ENCODE measurements at regions of chr16 and their contacts with region 1.

Region 1: GRCh38 chr16:85010931-85011845 is at the start of gene ZDHHC7:
- H3K4me3 ChIP-seq: peak within 1 kb of the TSS; percentile 79
- H3K27ac ChIP-seq: peak within 1 kb of the TSS; percentile 92
- H3K4me1 ChIP-seq: 0 out of 2 replicates have a peak, but pooled peaks cover 5% of the 10 kb centered on the region
- CTCF ChIP-seq: peak; percentile 47; the same call in 1 of the 2 replicates

Region 2: DNA sequence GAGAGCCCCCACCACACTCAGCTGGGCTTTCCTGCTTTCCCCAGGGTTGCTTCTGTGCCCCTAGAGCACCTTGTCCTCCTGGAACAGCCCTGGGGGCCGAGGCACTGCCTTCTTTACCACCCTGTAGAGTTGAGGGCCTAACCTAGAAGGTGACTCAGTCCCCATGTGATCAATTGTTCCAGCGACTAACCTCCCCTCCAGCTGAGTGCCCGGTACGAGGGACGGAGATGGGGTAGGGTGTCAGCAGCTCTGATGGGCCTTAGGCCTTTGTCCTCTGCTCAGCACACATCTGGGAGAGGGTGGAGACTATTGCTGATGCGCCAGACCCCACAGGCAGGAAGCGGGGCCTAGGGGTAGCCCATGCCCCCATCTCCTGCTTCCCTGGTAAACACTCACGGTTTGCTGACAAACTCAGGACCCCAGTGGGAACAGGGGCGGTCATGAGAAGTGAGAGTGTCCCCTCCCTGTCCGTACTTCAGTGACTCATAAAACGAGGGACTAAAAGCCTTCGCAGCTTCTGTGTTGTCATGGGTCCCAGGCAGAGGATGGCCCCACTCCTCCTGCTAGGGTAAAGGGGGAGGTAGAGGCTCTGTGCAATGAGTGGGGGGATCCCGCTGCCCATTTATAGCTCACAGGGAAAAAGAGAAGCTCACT is 1010.1 kb before region 1 on chr16:
- CTCF ChIA-PET with region 1: no interaction called
- POLR2A ChIA-PET with region 1: no interaction called
- H3K4me3 ChIP-seq: no peak overlapping the region
- H3K27ac ChIP-seq: no peak overlapping the region
- H3K4me1 ChIP-seq: no peaks in the 10 kb centered on the region
- CTCF ChIP-seq: no peak

Region 3: GRCh38 chr16:84785843-84786581 is 225.2 kb before region 1 on chr16:
- CTCF ChIA-PET with region 1: no interaction called
- POLR2A ChIA-PET with region 1: no interaction called
- H3K4me3 ChIP-seq: no peak overlapping the region
- H3K27ac ChIP-seq: no peak overlapping the region
- H3K4me1 ChIP-seq: peaks cover 3% of the 10 kb centered on the region; the same call in 1 of the 2 replicates
- CTCF ChIP-seq: no peak

Region 4: GRCh38 chr16:85027349-85027957 is 16.3 kb after region 1 on chr16 and contains the start of gene KIAA0513:
- CTCF ChIA-PET with region 1: interaction called, 7 read pairs
- POLR2A ChIA-PET with region 1: interaction called, 25 read pairs
- H3K4me3 ChIP-seq: peak within 1 kb of the TSS; percentile 81
- H3K27ac ChIP-seq: no peak within 1 kb of the TSS; the same call in 1 of the 2 replicates
- H3K4me1 ChIP-seq: peaks cover 16% of the 10 kb centered on the region
- CTCF ChIP-seq: peak; percentile 63

Region 5: GRCh38 chr16:85041219-85042166 is 30.3 kb after region 1 on chr16:
- CTCF ChIA-PET with region 1: no interaction called
- POLR2A ChIA-PET with region 1: no interaction called
- H3K4me3 ChIP-seq: no peak overlapping the region
- H3K27ac ChIP-seq: no peak overlapping the region
- H3K4me1 ChIP-seq: peaks cover 3% of the 10 kb centered on the region; the same call in 1 of the 2 replicates
- CTCF ChIP-seq: no peak

Measured in HEK293 (cell line).